Left lung (tissue), 14 donors: ENCODE measurements at regions of chr1 and their contacts with region 1.

Region 1: GRCh38 chr1:210143465-210144062 is 89.0 kb upstream of the SERTAD4 start:
- DNase-seq: peak; percentile 35 to 67 (median 56)
- ATAC-seq: peak; percentile 77
- H3K4me3 ChIP-seq: no peak overlapping the region
- H3K27ac ChIP-seq: no peak overlapping the region
- H3K4me1 ChIP-seq: no peaks in the 10 kb centered on the region
- H3K27me3 ChIP-seq: no peaks in the 10 kb centered on the region
- CTCF ChIP-seq: peak; percentile 33 to 59

Region 2: DNA sequence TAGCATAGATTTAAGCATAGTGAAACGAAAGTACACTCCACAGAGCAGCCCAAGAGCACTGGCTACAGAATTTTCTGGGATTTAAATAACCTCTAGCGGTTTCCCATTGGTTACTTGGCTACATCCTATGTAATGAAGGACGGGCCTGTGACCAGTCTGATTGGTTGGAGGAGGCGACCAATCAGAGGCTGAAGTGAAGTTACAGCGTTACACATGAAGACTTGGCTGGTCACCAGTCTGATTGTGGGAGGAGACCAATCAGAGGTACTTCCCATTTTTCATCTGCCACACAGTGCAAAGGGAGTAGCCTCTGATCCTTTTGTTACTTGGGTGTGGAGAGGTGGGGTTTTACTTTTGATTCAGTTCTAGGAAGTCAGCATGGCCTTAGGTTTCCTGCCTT is 53.7 kb before region 1 on chr1:
- intact Hi-C with region 1: no loop called
- DNase-seq: no peak
- ATAC-seq: no peak
- H3K4me3 ChIP-seq: no peak overlapping the region
- H3K27ac ChIP-seq: no peak overlapping the region
- H3K4me1 ChIP-seq: no peaks in the 10 kb centered on the region
- H3K27me3 ChIP-seq: no peaks in the 10 kb centered on the region
- CTCF ChIP-seq: no peak

Region 3: GRCh38 chr1:210311726-210312493 is 168.3 kb after region 1 on chr1:
- intact Hi-C with region 1: loop called in 1 of 2 experiments (anchors 5 kb)
- DNase-seq: no peak
- ATAC-seq: no peak
- H3K4me3 ChIP-seq: no peak overlapping the region
- H3K27ac ChIP-seq: peak overlapping the region; percentile 14 to 57
- H3K4me1 ChIP-seq: peaks cover 5 to 10% of the 10 kb centered on the region in 2 donors
- H3K27me3 ChIP-seq: peaks cover 0 to 18% of the 10 kb centered on the region in 2 donors
- CTCF ChIP-seq: no peak